Ovary (tissue), 10 donors: ENCODE measurements at regions of chr6 and their contacts with region 1.

Region 1: GRCh38 chr6:154060076-154060475 is 21.0 kb downstream of the OPRM1 start:
- DNase-seq: no peak
- H3K4me3 ChIP-seq: no peak overlapping the region
- H3K27ac ChIP-seq: no peak overlapping the region
- H3K4me1 ChIP-seq: no peaks in the 10 kb centered on the region
- H3K27me3 ChIP-seq: no peaks in the 10 kb centered on the region
- CTCF ChIP-seq: no peak
- EP300 ChIP-seq: no peak
- POLR2A ChIP-seq: no peak

Region 2: DNA sequence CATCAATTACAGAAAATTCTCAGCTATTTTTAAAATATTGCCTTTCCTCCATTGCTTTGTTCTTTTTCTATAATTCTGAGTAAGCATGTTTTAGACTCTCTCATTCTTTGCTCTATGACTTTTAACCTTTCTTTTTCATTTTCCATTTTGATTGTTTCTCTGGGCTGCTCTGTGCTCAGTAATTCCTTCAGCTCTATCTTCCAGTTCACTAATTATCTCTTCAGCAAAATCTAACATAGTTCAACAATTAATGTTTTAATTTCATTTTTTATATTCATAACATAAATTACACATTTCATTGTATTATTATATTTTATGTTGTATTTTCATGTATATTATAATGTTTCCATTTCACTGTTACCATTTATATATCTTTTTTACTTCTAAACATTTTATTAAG is 1594.4 kb after region 1 on chr6:
- intact Hi-C with region 1: loop called in 1 of 4 experiments (anchors 5 kb)
- DNase-seq: no peak
- H3K4me3 ChIP-seq: no peak overlapping the region
- H3K27ac ChIP-seq: no peak overlapping the region
- H3K4me1 ChIP-seq: no peaks in the 10 kb centered on the region
- H3K27me3 ChIP-seq: no peaks in the 10 kb centered on the region
- CTCF ChIP-seq: no peak
- EP300 ChIP-seq: no peak
- POLR2A ChIP-seq: no peak